B cell (primary cell): ENCODE measurements at regions of chr2 and their contacts with region 1.

Region 1: GRCh38 chr2:96580771-96581170 is 44.2 kb downstream of the ARID5A start:
- DNase-seq: no peak
- ATAC-seq: no peak
- H3K4me3 ChIP-seq: no peak overlapping the region
- H3K4me3 Mint-ChIP-seq: no peak overlapping the region
- H3K27ac ChIP-seq: no peak overlapping the region
- H3K27ac Mint-ChIP-seq: no peak overlapping the region
- H3K4me1 ChIP-seq: no peaks in the 10 kb centered on the region
- H3K4me1 Mint-ChIP-seq: no peaks in the 10 kb centered on the region
- H3K27me3 ChIP-seq: no peaks in the 10 kb centered on the region
- H3K27me3 Mint-ChIP-seq: no peaks in the 10 kb centered on the region
- CTCF ChIP-seq: no peak

Region 2: DNA sequence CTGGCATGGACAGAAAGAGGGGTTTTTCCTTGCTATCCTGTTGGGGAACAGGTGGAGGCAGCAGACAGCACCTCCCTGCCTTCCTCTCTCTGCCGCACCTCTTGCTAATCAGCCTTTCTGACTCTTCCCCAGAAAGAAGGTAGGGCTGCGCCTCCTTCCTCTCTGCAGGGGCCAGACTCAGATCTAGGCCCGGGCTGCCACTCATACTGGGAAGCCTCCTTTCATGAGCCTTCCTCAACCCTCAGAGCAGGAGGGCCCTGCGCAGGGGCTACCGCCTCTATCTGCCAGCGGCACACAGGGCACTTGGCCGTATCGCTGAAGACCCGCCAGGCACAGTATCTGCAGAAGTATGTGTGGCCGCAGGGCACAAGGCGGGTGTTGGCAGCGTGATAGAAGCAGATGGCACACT is 82.7 kb before region 1 on chr2:
- CTCF ChIA-PET with region 1: no interaction called
- POLR2A ChIA-PET with region 1: no interaction called
- intact Hi-C with region 1: no loop called
- DNase-seq: no peak
- ATAC-seq: no peak
- H3K4me3 ChIP-seq: no peak overlapping the region
- H3K4me3 Mint-ChIP-seq: no peak overlapping the region
- H3K27ac ChIP-seq: no peak overlapping the region
- H3K27ac Mint-ChIP-seq: no peak overlapping the region
- H3K4me1 ChIP-seq: peaks cover 11 to 12% of the 10 kb centered on the region in 2 donors
- H3K4me1 Mint-ChIP-seq: peaks cover 10% of the 10 kb centered on the region
- H3K27me3 ChIP-seq: no peaks in the 10 kb centered on the region
- H3K27me3 Mint-ChIP-seq: no peaks in the 10 kb centered on the region
- CTCF ChIP-seq: no peak

Region 3: GRCh38 chr2:96523659-96524481 is 56.9 kb before region 1 on chr2:
- CTCF ChIA-PET with region 1: no interaction called
- POLR2A ChIA-PET with region 1: no interaction called
- intact Hi-C with region 1: no loop called
- DNase-seq: no peak
- ATAC-seq: no peak
- H3K4me3 ChIP-seq: no peak overlapping the region
- H3K4me3 Mint-ChIP-seq: no peak overlapping the region
- H3K27ac ChIP-seq: no peak overlapping the region
- H3K27ac Mint-ChIP-seq: no peak overlapping the region
- H3K4me1 ChIP-seq: peaks cover 12 to 33% of the 10 kb centered on the region in 2 donors
- H3K4me1 Mint-ChIP-seq: peaks cover 23% of the 10 kb centered on the region
- H3K27me3 ChIP-seq: peaks cover 0 to 19% (median 0%) of the 10 kb centered on the region in 4 experiments
- H3K27me3 Mint-ChIP-seq: peaks cover 5% of the 10 kb centered on the region
- CTCF ChIP-seq: no peak

Region 4: GRCh38 chr2:96608469-96609455 is 28.0 kb after region 1 on chr2:
- CTCF ChIA-PET with region 1: no interaction called
- POLR2A ChIA-PET with region 1: interaction called, 14 read pairs
- intact Hi-C with region 1: no loop called
- DNase-seq: no peak
- ATAC-seq: no peak
- H3K4me3 ChIP-seq: no peak overlapping the region
- H3K4me3 Mint-ChIP-seq: no peak overlapping the region
- H3K27ac ChIP-seq: no peak overlapping the region
- H3K27ac Mint-ChIP-seq: no peak overlapping the region
- H3K4me1 ChIP-seq: no peaks in the 10 kb centered on the region
- H3K4me1 Mint-ChIP-seq: no peaks in the 10 kb centered on the region
- H3K27me3 ChIP-seq: no peaks in the 10 kb centered on the region
- H3K27me3 Mint-ChIP-seq: no peaks in the 10 kb centered on the region
- CTCF ChIP-seq: no peak

Region 5: GRCh38 chr2:96895726-96896651 is 315.2 kb after region 1 on chr2:
- CTCF ChIA-PET with region 1: no interaction called
- POLR2A ChIA-PET with region 1: no interaction called
- intact Hi-C with region 1: no loop called
- DNase-seq: no peak
- ATAC-seq: no peak
- H3K4me3 ChIP-seq: no peak overlapping the region
- H3K4me3 Mint-ChIP-seq: no peak overlapping the region
- H3K27ac ChIP-seq: no peak overlapping the region
- H3K27ac Mint-ChIP-seq: no peak overlapping the region
- H3K4me1 ChIP-seq: no peaks in the 10 kb centered on the region
- H3K4me1 Mint-ChIP-seq: peaks cover 4% of the 10 kb centered on the region
- H3K27me3 ChIP-seq: no peaks in the 10 kb centered on the region
- H3K27me3 Mint-ChIP-seq: peaks cover 3% of the 10 kb centered on the region
- CTCF ChIP-seq: no peak